Activated CD8-positive, alpha-beta T cell treated with anti-CD3 and anti-CD28 coated beads, Interleukin-2, amount 10 ng/mL, durations not matched to agents 7 days and 5 days (primary cell): ENCODE measurements at regions of chr16 and their contacts with region 1.

Region 1: DNA sequence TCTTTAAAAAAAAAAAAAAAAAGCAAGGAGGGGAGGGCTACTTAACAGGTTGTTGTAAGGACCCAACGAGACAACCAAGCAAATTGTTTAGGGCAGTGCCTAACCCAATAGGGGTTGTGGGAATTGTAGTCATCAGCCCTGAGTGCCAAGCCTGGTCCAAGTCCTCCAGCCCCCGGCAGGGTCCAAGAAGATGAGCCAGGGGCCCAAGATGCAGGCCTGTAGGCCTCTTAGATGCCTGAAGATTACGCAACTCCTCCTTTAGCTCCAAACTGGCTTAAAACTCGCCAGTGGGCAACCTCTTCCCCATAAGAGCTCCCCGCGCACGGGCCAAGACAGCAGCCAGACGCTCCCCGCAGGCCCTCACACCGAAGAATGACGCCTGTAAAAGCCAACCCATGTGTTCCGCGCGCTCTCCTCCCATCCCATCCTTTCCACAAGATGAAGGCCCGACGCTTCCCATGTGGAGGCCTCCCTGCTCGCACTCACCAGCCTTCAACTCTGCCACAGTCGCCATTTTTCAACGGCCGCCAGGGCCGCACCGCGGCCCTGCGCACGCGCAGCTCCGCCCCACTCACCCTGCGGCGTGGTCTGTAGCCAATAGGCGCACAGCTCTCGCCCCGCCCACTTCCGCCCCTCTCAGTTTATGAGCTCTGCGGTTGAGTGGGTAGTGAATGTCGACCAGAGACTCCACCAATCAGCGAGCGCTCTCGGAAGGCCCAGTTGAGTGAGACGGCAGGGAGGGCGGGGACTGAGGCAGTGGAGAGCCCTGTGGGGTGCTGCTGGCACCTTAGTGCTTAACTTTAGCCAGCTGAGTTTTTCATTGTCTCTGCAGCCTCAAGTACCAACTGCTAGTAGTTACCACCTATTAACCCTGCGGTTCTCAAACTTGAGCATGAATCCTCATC is at the start of gene CEP20:
- DNase-seq: peak; percentile 100
- ATAC-seq: peak; percentile 99
- H3K4me3 Mint-ChIP-seq: peak within 1 kb of the TSS; percentile 98
- H3K27ac Mint-ChIP-seq: peak within 1 kb of the TSS; percentile 99
- H3K4me1 Mint-ChIP-seq: peaks cover 31% of the 10 kb centered on the region
- H3K27me3 Mint-ChIP-seq: no peaks in the 10 kb centered on the region
- total RNA-seq, gene CEP20: 38.8 to 45.0 TPM

Region 2: GRCh38 chr16:15874745-15875314 is 13.5 kb before region 1 on chr16:
- CTCF ChIA-PET with region 1: interaction called, 10 read pairs
- POLR2A ChIA-PET with region 1: interaction called, 11 read pairs
- DNase-seq: no peak
- ATAC-seq: no peak
- H3K4me3 Mint-ChIP-seq: no peak overlapping the region
- H3K27ac Mint-ChIP-seq: no peak overlapping the region
- H3K4me1 Mint-ChIP-seq: peaks cover 4% of the 10 kb centered on the region
- H3K27me3 Mint-ChIP-seq: no peaks in the 10 kb centered on the region

Region 3: GRCh38 chr16:15949210-15950160 is 61.2 kb after region 1 on chr16 and contains the start of gene ABCC1:
- CTCF ChIA-PET with region 1: interaction called, 3 read pairs
- POLR2A ChIA-PET with region 1: interaction called, 20 read pairs
- DNase-seq: peak; percentile 56
- ATAC-seq: peak; percentile 80
- H3K4me3 Mint-ChIP-seq: peak within 1 kb of the TSS; percentile 96
- H3K27ac Mint-ChIP-seq: peak within 1 kb of the TSS; percentile 96
- H3K4me1 Mint-ChIP-seq: peaks cover 37% of the 10 kb centered on the region
- H3K27me3 Mint-ChIP-seq: no peaks in the 10 kb centered on the region
- total RNA-seq, gene ABCC1: 46.0 to 46.9 TPM

Region 4: DNA sequence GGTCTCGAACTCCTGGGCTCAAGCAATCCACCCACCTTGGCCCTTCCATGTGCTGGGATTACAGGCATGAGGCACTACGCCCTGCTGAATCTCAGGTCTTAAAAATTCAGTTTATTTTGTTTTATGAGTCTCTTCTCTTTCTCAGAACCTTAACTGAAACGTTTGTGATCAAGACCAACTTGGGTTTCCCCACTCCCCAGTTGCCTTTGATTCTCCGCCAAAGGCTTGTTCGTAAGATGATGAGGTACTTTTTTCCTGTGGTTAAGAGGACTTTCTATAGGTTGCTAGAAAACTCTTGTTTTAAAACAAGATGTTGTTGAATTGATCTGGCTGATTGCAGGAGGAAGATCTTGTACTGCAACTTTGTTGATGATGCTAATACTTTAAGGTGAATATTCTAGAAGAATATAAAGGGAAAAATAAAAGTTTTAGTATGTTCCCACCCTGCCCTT is 72.8 kb after region 1 on chr16:
- CTCF ChIA-PET with region 1: interaction called, 3 read pairs
- POLR2A ChIA-PET with region 1: interaction called, 10 read pairs
- DNase-seq: peak; percentile 83
- ATAC-seq: peak; percentile 83
- H3K4me3 Mint-ChIP-seq: peak overlapping the region; percentile 80
- H3K27ac Mint-ChIP-seq: peak overlapping the region; percentile 97
- H3K4me1 Mint-ChIP-seq: peaks cover 72% of the 10 kb centered on the region
- H3K27me3 Mint-ChIP-seq: no peaks in the 10 kb centered on the region

Region 5: DNA sequence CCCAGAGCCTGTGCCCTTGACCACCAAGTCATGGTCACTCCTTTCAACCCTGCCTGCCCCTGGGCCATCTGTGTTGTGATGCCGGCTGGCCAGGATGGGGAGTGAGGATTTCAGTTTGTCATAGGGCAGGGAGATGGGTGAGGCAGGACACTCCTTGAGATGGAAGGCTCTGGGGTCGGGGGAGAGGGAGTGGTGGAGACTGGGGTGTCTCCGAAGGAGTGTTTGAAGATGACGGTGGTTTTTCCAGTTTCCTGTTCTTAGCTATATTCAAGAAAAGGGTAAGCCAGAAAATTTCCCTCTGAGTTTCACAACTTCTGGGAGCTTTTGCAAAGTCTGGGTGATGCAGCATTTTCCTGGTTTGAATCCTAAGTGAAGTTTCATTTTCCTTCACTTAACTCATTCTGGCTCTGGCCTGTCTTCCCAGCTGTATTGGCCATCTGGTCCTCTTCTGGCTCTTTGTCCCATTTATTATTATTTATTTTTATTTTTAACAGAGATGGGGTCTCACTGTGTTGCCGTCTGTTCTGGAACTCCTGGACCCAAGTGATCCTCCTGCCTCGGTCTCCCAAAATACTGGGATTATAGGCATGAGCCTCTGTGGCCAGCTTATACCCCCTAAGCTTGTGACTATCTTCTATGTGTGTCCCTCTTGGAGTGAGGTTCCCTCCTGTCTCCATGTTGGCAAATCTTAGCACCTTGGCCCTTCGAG is 88.8 kb after region 1 on chr16:
- CTCF ChIA-PET with region 1: no interaction called
- POLR2A ChIA-PET with region 1: no interaction called
- DNase-seq: no peak
- ATAC-seq: no peak
- H3K4me3 Mint-ChIP-seq: no peak overlapping the region
- H3K27ac Mint-ChIP-seq: no peak overlapping the region
- H3K4me1 Mint-ChIP-seq: peaks cover 2% of the 10 kb centered on the region
- H3K27me3 Mint-ChIP-seq: no peaks in the 10 kb centered on the region

Region 6: DNA sequence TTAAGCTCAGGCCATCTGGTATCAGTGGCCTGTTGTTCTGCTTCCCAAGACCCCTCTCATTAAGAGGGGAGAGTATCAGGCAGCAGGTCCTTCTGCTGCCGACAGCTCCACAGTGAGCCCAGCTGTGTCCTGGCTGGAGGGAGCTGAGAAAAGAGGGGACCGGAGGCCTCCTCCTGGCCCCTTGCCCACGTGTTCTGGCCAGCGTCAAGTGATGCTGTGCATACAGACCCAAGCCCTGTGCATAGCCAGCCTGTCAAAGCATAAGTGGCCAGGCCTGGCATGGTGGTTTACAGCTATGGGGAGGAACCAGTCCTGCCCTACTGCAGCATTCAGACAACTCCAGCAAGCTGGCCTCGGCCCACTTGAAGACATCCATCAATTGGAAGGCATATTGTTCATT is 287.0 kb after region 1 on chr16:
- CTCF ChIA-PET with region 1: no interaction called
- POLR2A ChIA-PET with region 1: no interaction called
- DNase-seq: no peak
- ATAC-seq: no peak
- H3K4me3 Mint-ChIP-seq: no peak overlapping the region
- H3K27ac Mint-ChIP-seq: no peak overlapping the region
- H3K4me1 Mint-ChIP-seq: no peaks in the 10 kb centered on the region
- H3K27me3 Mint-ChIP-seq: no peaks in the 10 kb centered on the region